ENCODE measurements at regions of chr2 and their contacts with region 1.

Region 1: DNA sequence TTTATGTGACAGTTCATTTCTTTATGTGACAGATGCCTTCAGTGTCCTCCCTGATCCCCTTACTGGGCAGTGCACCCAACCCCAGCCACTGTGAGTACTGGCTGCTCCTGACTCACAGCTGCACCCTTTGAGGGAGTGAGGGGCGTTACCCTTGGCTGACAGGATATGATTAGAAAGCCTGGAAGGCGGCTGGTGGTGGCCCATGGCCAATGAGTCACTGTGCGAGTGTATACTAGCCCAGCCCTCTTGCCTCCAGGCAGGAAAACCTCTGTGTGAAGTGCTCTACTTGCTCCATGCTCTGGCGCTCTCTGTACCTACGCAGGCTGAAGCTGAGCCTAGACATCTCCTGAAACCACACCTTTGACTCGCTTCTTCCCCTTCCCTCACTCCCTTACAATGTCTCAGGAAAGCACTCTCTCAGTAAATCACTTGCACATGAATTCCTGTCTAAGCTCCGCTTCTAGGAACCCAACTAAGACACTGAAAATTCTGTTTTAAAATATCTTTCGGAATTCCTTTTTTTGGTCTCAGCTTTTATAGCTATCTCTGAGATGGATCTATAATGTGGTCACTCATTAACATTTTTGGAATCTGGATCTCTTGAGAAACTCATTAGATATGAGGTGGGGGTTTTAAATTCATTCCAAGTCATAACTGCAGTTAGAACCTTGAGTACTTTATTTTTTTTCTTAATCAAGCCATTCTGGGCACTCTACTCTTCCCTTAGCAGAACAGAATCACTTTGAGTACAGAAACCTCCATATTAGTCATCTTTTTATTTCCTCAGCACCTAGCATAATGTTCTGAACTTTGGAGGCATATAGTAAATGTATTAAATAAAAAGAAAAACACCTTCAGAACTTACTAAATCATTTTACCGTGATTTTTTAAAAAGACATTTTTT is 25.3 kb upstream of the STAM2 start:
- DNase-seq: peak; percentile 93
- H3K4me3 ChIP-seq: peak overlapping the region; percentile 10
- H3K27me3 ChIP-seq: no peaks in the 10 kb centered on the region
- CTCF ChIP-seq: no peak

Region 2: GRCh38 chr2:152298754-152299153 is 97.9 kb after region 1 on chr2:
- CTCF ChIA-PET with region 1: no interaction called
- POLR2A ChIA-PET with region 1: interaction called, 14 read pairs
- DNase-seq: no peak
- H3K4me3 ChIP-seq: no peak overlapping the region
- H3K27me3 ChIP-seq: no peaks in the 10 kb centered on the region; the same call in none of the 2 replicates
- CTCF ChIP-seq: no peak

Measured in BJ (cell line).